Activated B cell treated with CpG ODN at 0.5 μM for 24 hours (primary cell): ENCODE measurements at regions of chr5 and their contacts with region 1.

Region 1: DNA sequence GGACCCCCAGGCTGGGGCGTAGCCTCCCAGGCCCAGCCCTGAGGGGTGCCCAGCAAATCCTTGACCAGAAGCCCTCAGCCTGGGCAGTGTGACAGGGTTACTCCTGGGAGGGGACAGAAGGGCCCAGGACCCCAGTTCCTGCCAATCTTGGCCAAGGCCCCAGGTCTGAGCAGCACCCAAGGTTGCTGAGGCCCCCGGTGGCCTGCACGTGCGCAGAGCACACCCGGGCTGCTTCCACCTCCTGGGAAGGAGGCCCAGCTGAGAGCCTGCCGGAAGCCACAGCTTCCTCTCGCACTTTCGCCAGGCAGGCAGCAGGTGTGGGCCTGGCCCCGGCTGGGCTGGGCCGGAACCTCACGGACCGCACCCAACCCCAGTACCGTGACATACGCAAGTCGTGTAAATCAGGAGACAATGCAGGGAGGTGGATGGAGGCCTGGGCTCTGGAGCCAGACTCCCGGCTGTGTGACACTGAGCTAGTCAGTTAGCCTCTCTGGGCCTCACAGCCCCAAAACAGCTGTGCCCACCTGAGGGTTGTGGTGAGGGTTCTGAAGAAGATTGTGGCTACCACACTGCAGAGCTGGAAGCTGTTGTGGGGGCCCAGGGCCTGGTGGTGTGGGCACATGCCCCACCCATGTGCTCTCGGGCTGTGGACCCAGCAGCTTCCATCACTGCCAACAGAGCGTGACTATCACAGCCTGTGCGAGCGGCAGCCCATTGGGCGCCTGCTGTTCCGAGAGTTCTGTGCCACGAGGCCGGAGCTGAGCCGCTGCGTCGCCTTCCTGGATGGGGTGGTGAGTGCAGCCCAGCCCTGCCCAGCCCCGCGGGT is 5.1 kb downstream of the GRK6 start:
- DNase-seq: peak; percentile 73
- ATAC-seq: peak; percentile 53
- H3K4me3 Mint-ChIP-seq: peak overlapping the region; percentile 88
- H3K27ac Mint-ChIP-seq: peak overlapping the region; percentile 89
- H3K4me1 Mint-ChIP-seq: peaks cover 70% of the 10 kb centered on the region
- H3K27me3 Mint-ChIP-seq: no peaks in the 10 kb centered on the region
- CTCF ChIP-seq: no peak

Region 2: GRCh38 chr5:177409043-177409801 is 22.3 kb before region 1 on chr5 and contains the start of gene F12:
- CTCF ChIA-PET with region 1: interaction called, 53 read pairs
- POLR2A ChIA-PET with region 1: interaction called, 43 read pairs
- intact Hi-C with region 1: loop called (anchors 2 kb)
- DNase-seq: no peak
- ATAC-seq: no peak
- H3K4me3 Mint-ChIP-seq: no peak within 1 kb of the TSS
- H3K27ac Mint-ChIP-seq: no peak within 1 kb of the TSS
- H3K4me1 Mint-ChIP-seq: peaks cover 32% of the 10 kb centered on the region
- H3K27me3 Mint-ChIP-seq: no peaks in the 10 kb centered on the region
- CTCF ChIP-seq: no peak
- total RNA-seq, gene F12: 0.31 TPM in 1 of 2 replicates, not detected in the other

Region 3: DNA sequence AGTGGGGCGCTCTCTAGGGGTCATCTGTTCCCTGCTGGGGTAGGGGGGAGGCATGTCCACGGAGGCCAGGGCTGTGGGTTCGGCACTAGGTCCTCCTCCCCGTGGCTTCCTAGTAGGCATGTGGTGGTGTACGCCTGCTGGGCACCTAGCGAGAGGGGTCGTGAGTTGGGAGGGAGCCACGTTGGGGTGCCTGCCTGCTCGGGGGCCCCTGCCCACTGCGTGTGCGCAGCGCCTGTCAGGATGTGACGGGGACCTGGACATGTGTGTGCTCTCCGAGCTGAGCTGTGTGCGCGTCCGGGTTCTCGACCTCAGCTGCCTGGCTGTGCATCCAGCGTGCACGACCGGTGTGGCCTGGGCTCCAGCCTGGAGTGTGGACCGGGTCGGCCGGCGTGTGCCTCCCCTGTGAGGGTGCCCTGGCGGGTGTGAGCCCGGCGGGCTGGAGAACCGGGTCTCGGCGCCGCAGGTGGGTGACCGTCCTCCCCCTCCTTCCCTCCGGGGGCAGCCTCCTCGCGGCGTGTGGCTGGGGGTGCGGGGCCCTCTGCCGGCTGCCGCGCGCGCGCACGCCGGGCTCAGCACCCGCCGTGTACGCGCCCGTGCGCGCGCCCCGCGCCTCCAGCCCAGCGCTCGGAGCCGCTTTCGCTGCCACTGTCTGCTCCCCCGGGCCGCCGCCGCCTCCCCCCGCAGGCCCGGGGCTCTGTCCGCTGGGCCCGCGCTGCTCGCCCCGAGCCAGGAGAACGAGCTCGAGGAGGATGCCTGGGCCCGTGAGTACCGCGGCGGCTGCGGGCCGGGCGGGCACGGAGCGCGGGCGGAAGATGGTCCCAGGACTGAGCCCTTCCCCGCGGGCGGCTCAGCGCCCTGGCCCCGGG is 14.9 kb after region 1 on chr5 and contains the start of gene PRR7:
- CTCF ChIA-PET with region 1: interaction called, 29 read pairs
- POLR2A ChIA-PET with region 1: interaction called, 296 read pairs
- intact Hi-C with region 1: loop called (anchors 1 kb)
- DNase-seq: peak; percentile 77
- ATAC-seq: peak; percentile 64
- H3K4me3 Mint-ChIP-seq: peak within 1 kb of the TSS; percentile 75
- H3K27ac Mint-ChIP-seq: peak within 1 kb of the TSS; percentile 86
- H3K4me1 Mint-ChIP-seq: peaks cover 41% of the 10 kb centered on the region
- H3K27me3 Mint-ChIP-seq: no peaks in the 10 kb centered on the region
- CTCF ChIP-seq: no peak
- total RNA-seq, gene PRR7: 2.4 and 3.2 TPM in 2 replicates

Region 4: DNA sequence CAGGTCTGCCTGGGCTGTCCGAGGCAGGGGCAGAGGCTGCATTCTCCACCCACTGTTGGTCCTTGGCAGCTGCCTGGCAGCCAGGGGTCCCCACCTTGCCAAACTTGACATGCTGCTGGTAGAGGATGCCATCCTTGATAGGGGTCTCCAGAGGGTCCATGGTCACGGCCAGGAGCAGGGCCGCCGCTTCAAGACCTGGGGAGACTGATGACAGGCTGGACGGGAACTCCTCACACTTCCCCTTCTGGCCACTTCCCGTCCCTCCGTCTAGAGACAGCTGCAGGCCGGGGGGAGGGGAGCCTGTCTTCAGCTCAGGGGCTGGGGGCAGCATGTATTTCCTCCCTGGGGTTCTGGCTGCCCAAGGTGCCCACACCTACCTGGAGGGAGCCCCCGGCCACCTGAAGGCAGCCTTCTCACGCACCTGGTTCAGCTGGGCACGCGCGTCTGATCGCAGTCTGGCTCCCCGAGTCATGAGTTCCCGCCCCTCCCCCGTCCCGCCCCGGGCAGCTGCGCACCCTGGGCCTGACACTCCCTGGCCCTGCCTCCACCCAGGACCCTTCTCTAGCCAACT is 77.9 kb after region 1 on chr5 and contains the start of gene DOK3:
- CTCF ChIA-PET with region 1: no interaction called
- POLR2A ChIA-PET with region 1: interaction called, 12 read pairs
- intact Hi-C with region 1: no loop called
- DNase-seq: peak; percentile 52
- ATAC-seq: peak; percentile 33
- H3K4me3 Mint-ChIP-seq: peak within 1 kb of the TSS; percentile 93
- H3K27ac Mint-ChIP-seq: peak within 1 kb of the TSS; percentile 96
- H3K4me1 Mint-ChIP-seq: peaks cover 60% of the 10 kb centered on the region
- H3K27me3 Mint-ChIP-seq: no peaks in the 10 kb centered on the region
- CTCF ChIP-seq: no peak
- total RNA-seq, gene DOK3: 82.5 and 88.5 TPM in 2 replicates